ENCODE measurements at regions of chr9 and their contacts with region 1.

Region 1: GRCh38 chr9:21559424-21560280 is 77.5 kb upstream of the IFNE start:
- DNase-seq: peak; percentile 26
- H3K4me3 Mint-ChIP-seq: peak overlapping the region; percentile 79
- H3K27ac Mint-ChIP-seq: no peak overlapping the region
- H3K4me1 Mint-ChIP-seq: peaks cover 19% of the 10 kb centered on the region
- H3K27me3 Mint-ChIP-seq: peaks cover 58% of the 10 kb centered on the region

Region 2: GRCh38 chr9:21465859-21466518 is 93.7 kb before region 1 on chr9:
- intact Hi-C with region 1: loop called (anchors 5 kb)
- DNase-seq: no peak
- H3K4me3 Mint-ChIP-seq: no peak overlapping the region
- H3K27ac Mint-ChIP-seq: no peak overlapping the region
- H3K4me1 Mint-ChIP-seq: no peaks in the 10 kb centered on the region
- H3K27me3 Mint-ChIP-seq: peaks cover 18% of the 10 kb centered on the region

Region 3: GRCh38 chr9:21576331-21577189 is 16.9 kb after region 1 on chr9:
- intact Hi-C with region 1: loop called (anchors 2 kb)
- DNase-seq: no peak
- H3K4me3 Mint-ChIP-seq: no peak overlapping the region
- H3K27ac Mint-ChIP-seq: no peak overlapping the region
- H3K4me1 Mint-ChIP-seq: peaks cover 31% of the 10 kb centered on the region
- H3K27me3 Mint-ChIP-seq: peaks cover 19% of the 10 kb centered on the region

Region 4: GRCh38 chr9:21591221-21592062 is 31.8 kb after region 1 on chr9:
- intact Hi-C with region 1: loop called (anchors 5 kb)
- DNase-seq: peak; percentile 24
- H3K4me3 Mint-ChIP-seq: no peak overlapping the region
- H3K27ac Mint-ChIP-seq: peak overlapping the region; percentile 24
- H3K4me1 Mint-ChIP-seq: peaks cover 19% of the 10 kb centered on the region
- H3K27me3 Mint-ChIP-seq: peaks cover 7% of the 10 kb centered on the region

Measured in activated T-helper 2 cell treated with anti-CD3 and anti-CD28 coated beads, Interferon-gamma antibody, Interleukin-2, Interleukin-4, amounts not matched to agents 10 μg/mL and 5 μg/mL and 100 μg/mL, durations not matched to agents 14 hours and 24 hours and 36 hours (primary cell).